MCF 10A (cell line): ENCODE measurements at regions of chr5 and their contacts with region 1.

Region 1: GRCh38 chr5:114101153-114101552 is 260.7 kb upstream of the KCNN2 start:
- DNase-seq: peak; percentile 54
- H3K4me3 Mint-ChIP-seq: no peak overlapping the region
- H3K27ac Mint-ChIP-seq: no peak overlapping the region
- H3K4me1 Mint-ChIP-seq: no peaks in the 10 kb centered on the region
- H3K27me3 Mint-ChIP-seq: peaks cover 60% of the 10 kb centered on the region
- CTCF ChIP-seq: peak; percentile 52

Region 2: GRCh38 chr5:113800686-113801085 is 300.5 kb before region 1 on chr5:
- CTCF ChIA-PET with region 1: no interaction called
- POLR2A ChIA-PET with region 1: no interaction called
- intact Hi-C with region 1: no loop called
- DNase-seq: no peak
- H3K4me3 Mint-ChIP-seq: no peak overlapping the region
- H3K27ac Mint-ChIP-seq: no peak overlapping the region
- H3K4me1 Mint-ChIP-seq: no peaks in the 10 kb centered on the region
- H3K27me3 Mint-ChIP-seq: peaks cover 55% of the 10 kb centered on the region
- CTCF ChIP-seq: no peak

Region 3: GRCh38 chr5:113969901-113970300 is 131.3 kb before region 1 on chr5:
- CTCF ChIA-PET with region 1: no interaction called
- POLR2A ChIA-PET with region 1: no interaction called
- intact Hi-C with region 1: no loop called
- DNase-seq: no peak
- H3K4me3 Mint-ChIP-seq: no peak overlapping the region
- H3K27ac Mint-ChIP-seq: no peak overlapping the region
- H3K4me1 Mint-ChIP-seq: no peaks in the 10 kb centered on the region
- H3K27me3 Mint-ChIP-seq: peaks cover 39% of the 10 kb centered on the region
- CTCF ChIP-seq: no peak

Region 4: GRCh38 chr5:114001076-114001475 is 100.1 kb before region 1 on chr5:
- CTCF ChIA-PET with region 1: no interaction called
- POLR2A ChIA-PET with region 1: no interaction called
- intact Hi-C with region 1: no loop called
- DNase-seq: no peak
- H3K4me3 Mint-ChIP-seq: no peak overlapping the region
- H3K27ac Mint-ChIP-seq: no peak overlapping the region
- H3K4me1 Mint-ChIP-seq: no peaks in the 10 kb centered on the region
- H3K27me3 Mint-ChIP-seq: peaks cover 53% of the 10 kb centered on the region
- CTCF ChIP-seq: no peak

Region 5: GRCh38 chr5:114223866-114224265 is 122.7 kb after region 1 on chr5:
- CTCF ChIA-PET with region 1: no interaction called
- POLR2A ChIA-PET with region 1: no interaction called
- intact Hi-C with region 1: loop called (anchors 5 kb)
- DNase-seq: peak; percentile 53
- H3K4me3 Mint-ChIP-seq: no peak overlapping the region
- H3K27ac Mint-ChIP-seq: no peak overlapping the region
- H3K4me1 Mint-ChIP-seq: no peaks in the 10 kb centered on the region
- H3K27me3 Mint-ChIP-seq: peaks cover 12% of the 10 kb centered on the region
- CTCF ChIP-seq: peak; percentile 45

Region 6: DNA sequence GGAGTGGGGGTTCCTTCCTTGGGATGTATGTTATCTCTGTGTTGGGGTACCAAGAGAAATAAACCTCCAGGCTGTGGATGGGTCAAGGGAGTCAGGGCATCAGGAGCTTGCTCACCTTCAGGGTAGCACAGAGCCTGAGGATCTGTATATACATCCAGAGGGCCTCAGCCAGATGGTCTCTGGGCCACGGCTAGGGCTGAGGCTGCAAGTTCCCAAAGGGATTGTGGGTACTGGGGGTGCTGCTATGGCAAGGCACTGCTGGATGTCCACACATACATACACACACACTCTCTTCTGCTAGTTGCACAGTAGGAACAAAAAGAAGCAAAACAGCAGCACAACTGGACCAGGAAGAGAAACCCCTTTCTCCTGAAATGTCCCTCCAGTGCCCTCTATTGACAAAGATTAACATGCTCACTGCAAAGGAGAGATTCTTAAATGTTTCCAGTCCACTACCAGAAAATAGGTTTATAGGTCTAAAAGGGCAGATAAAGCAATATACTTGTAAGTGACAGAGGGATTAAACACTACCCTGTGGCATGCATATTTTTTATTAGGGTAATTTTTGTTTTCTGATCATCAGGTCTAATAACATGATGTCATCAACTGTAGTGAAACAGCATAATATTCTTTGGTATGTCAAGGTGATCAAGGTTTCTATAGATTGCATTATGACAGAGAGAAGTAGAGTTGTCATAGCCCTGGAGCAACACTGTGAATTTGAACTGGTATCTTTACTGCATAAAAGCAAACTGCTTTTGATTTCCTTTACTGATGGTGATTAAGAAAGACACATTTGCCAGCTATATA is 204.5 kb after region 1 on chr5:
- CTCF ChIA-PET with region 1: no interaction called
- POLR2A ChIA-PET with region 1: no interaction called
- intact Hi-C with region 1: loop called (anchors 2 kb)
- DNase-seq: peak; percentile 29
- H3K4me3 Mint-ChIP-seq: no peak overlapping the region
- H3K27ac Mint-ChIP-seq: no peak overlapping the region
- H3K4me1 Mint-ChIP-seq: no peaks in the 10 kb centered on the region
- H3K27me3 Mint-ChIP-seq: peaks cover 52% of the 10 kb centered on the region
- CTCF ChIP-seq: peak; percentile 24

Region 7: GRCh38 chr5:114789773-114790402 is 688.7 kb after region 1 on chr5:
- CTCF ChIA-PET with region 1: interaction called, 3 read pairs
- POLR2A ChIA-PET with region 1: no interaction called
- intact Hi-C with region 1: loop called (anchors 2 kb)
- DNase-seq: peak; percentile 47
- H3K4me3 Mint-ChIP-seq: no peak overlapping the region
- H3K27ac Mint-ChIP-seq: no peak overlapping the region
- H3K4me1 Mint-ChIP-seq: no peaks in the 10 kb centered on the region
- H3K27me3 Mint-ChIP-seq: peaks cover 49% of the 10 kb centered on the region
- CTCF ChIP-seq: peak; percentile 40